Common myeloid progenitor, CD34-positive (primary cell): ENCODE measurements at regions of chr15 and their contacts with region 1.

Region 1: DNA sequence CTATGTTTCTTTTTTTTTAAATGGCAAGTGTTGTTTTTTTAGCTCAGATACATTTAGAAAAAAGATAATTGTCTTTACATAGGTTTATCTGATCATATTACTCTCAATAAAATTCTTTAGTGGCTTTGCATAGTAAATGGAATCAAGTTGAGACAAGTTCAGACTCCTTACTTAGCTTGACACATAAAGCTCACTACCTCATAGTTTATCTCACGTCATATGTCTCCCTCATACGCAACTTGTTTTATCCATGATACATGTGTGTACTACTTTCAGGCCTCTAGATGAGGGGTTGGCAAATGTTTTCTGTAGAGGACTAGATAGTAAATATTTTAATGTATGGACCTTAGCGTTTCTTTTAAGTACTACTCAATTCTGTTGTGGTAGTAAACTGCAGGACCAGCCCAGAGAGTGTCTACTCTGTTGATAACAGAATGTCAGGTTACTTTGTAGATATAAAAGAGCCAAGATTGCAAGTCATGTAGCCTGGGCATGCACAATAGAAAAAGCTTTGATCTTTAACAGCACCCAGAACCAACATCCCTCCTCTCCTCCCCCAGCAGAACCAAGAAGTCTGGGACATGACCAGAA is 28.2 kb upstream of the MGA start:
- DNase-seq: no peak
- H3K4me3 ChIP-seq: no peak overlapping the region
- H3K27ac ChIP-seq: no peak overlapping the region
- H3K4me1 ChIP-seq: peaks cover 0 to 12% (median 8%) of the 10 kb centered on the region in 4 experiments
- H3K27me3 ChIP-seq: no peaks in the 10 kb centered on the region

Region 2: GRCh38 chr15:41603941-41604911 is 27.7 kb before region 1 on chr15:
- CTCF ChIA-PET with region 1: interaction called, 10 read pairs
- POLR2A ChIA-PET with region 1: no interaction called
- DNase-seq: peak; percentile 72 to 81 (median 78)
- H3K4me3 ChIP-seq: peak overlapping the region in 6 of 7 experiments; percentile 1 to 65 (median 24)
- H3K27ac ChIP-seq: no peak overlapping the region
- H3K4me1 ChIP-seq: peaks cover 0 to 9% (median 6%) of the 10 kb centered on the region in 4 experiments
- H3K27me3 ChIP-seq: peaks cover 0 to 7% (median 0%) of the 10 kb centered on the region in 5 experiments